Ascending aorta (tissue), 2 donors: ENCODE measurements at regions of chr2 and their contacts with region 1.

Region 1: DNA sequence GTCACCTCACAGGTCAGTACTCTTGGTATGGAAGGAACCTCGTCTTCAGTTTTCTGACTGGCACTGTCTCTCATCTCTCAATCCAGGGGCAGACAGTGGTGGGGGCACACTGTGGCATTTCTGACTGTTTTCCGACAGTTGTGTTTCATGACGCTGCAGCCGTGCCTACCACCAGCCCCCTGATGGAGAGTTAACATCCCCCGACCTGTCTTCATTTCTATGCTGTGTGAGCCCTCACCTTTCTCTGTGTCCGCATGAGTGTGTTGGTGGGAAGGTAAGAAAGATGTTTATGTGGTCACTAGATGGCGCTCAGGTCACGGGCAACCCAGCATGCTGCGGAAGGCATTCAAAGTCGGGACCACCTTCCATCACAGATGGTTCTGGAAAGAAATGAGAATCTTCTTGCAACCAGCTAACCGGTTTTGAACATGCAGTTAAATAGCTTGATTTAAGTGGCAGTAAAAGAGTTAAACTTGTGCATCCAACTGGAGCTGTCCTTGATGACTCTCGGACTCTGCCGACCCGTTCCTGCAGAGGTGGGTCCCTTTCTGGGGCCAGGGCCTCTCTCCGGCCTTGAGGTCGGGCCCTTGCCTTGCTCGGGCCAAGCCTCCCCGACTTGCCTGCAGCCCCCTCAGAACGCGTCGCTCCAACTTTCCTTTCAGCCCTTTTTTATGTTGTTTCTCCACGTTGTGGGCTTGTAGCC is 92.4 kb downstream of the DYSF start:
- DNase-seq: peak in 1 of 2 donors; percentile 76
- H3K4me3 ChIP-seq: no peak overlapping the region
- H3K27ac ChIP-seq: no peak overlapping the region
- H3K4me1 ChIP-seq: no peaks in the 10 kb centered on the region
- H3K27me3 ChIP-seq: no peaks in the 10 kb centered on the region
- CTCF ChIP-seq: peak; percentile 74 to 84 (median 75)

Region 2: GRCh38 chr2:71510196-71510807 is 35.4 kb before region 1 on chr2:
- intact Hi-C with region 1: no loop called
- DNase-seq: peak in 1 of 2 donors; percentile 83
- H3K4me3 ChIP-seq: no peak overlapping the region
- H3K27ac ChIP-seq: no peak overlapping the region
- H3K4me1 ChIP-seq: no peaks in the 10 kb centered on the region
- H3K27me3 ChIP-seq: no peaks in the 10 kb centered on the region
- CTCF ChIP-seq: peak; percentile 76 to 91 (median 86)

Region 3: GRCh38 chr2:71614976-71615766 is 69.4 kb after region 1 on chr2:
- intact Hi-C with region 1: loop called (anchors 2 kb)
- DNase-seq: peak; percentile 46 to 89
- H3K4me3 ChIP-seq: no peak overlapping the region
- H3K27ac ChIP-seq: peak overlapping the region; percentile 84 to 87
- H3K4me1 ChIP-seq: peaks cover 0 to 27% of the 10 kb centered on the region in 2 donors
- H3K27me3 ChIP-seq: no peaks in the 10 kb centered on the region
- CTCF ChIP-seq: no peak

Region 4: GRCh38 chr2:71685078-71685848 is 139.5 kb after region 1 on chr2:
- intact Hi-C with region 1: loop called (anchors 5 kb)
- DNase-seq: no peak
- H3K4me3 ChIP-seq: no peak overlapping the region
- H3K27ac ChIP-seq: peak overlapping the region; percentile 37 to 63
- H3K4me1 ChIP-seq: peaks cover 3% of the 10 kb centered on the region in 2 donors
- H3K27me3 ChIP-seq: no peaks in the 10 kb centered on the region
- CTCF ChIP-seq: no peak

Region 5: GRCh38 chr2:71742953-71743601 is 197.4 kb after region 1 on chr2:
- intact Hi-C with region 1: no loop called
- DNase-seq: peak; percentile 54 to 93
- H3K4me3 ChIP-seq: no peak overlapping the region
- H3K27ac ChIP-seq: peak overlapping the region; percentile 53 to 62
- H3K4me1 ChIP-seq: peaks cover 23% of the 10 kb centered on the region in 2 donors
- H3K27me3 ChIP-seq: no peaks in the 10 kb centered on the region
- CTCF ChIP-seq: no peak

Region 6: GRCh38 chr2:71882949-71883472 is 337.3 kb after region 1 on chr2:
- intact Hi-C with region 1: loop called (anchors 5 kb)
- DNase-seq: peak in 1 of 2 donors; percentile 84
- H3K4me3 ChIP-seq: no peak overlapping the region
- H3K27ac ChIP-seq: no peak overlapping the region
- H3K4me1 ChIP-seq: peaks cover 21 to 40% of the 10 kb centered on the region in 2 donors
- H3K27me3 ChIP-seq: no peaks in the 10 kb centered on the region
- CTCF ChIP-seq: no peak

Region 7: GRCh38 chr2:71923887-71924533 is 378.3 kb after region 1 on chr2:
- intact Hi-C with region 1: loop called (anchors 5 kb)
- DNase-seq: no peak
- H3K4me3 ChIP-seq: no peak overlapping the region
- H3K27ac ChIP-seq: no peak overlapping the region
- H3K4me1 ChIP-seq: no peaks in the 10 kb centered on the region
- H3K27me3 ChIP-seq: no peaks in the 10 kb centered on the region
- CTCF ChIP-seq: peak; percentile 58 to 85 (median 78)

Region 8: DNA sequence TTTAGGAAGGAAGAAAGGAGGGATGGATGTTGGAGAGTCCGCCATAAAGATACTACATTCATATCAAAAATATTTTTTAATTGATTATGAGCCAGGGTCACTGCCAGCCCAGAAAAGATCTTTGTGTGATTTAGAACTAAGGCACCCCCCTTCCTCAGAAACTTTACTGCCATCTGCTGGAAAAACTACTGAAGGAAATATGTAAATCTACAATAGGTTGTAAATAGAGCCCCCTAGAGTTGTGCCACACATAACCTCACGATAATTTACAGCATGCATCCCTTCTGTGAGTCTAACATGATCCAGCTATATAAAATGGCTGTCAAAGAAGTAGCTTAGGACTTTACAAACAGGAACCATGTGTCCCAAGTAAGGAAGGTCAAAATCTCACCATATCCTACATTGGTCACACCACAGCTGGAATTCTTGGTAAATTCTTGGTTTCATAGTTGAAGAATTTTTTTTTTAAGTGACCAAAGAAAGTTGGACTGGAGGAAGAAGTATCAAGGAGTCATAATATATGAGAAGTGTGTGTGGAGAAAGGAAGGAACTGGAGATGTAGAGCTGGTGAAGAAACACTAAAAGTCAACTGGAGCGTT is 449.4 kb after region 1 on chr2:
- intact Hi-C with region 1: loop called (anchors 5 kb)
- DNase-seq: no peak
- H3K4me3 ChIP-seq: no peak overlapping the region
- H3K27ac ChIP-seq: no peak overlapping the region
- H3K4me1 ChIP-seq: no peaks in the 10 kb centered on the region
- H3K27me3 ChIP-seq: no peaks in the 10 kb centered on the region
- CTCF ChIP-seq: peak in 2 of 3 experiments; percentile 31 to 57

Region 9: GRCh38 chr2:72579591-72580180 is 1034.0 kb after region 1 on chr2:
- intact Hi-C with region 1: loop called (anchors 5 kb)
- DNase-seq: no peak
- H3K4me3 ChIP-seq: no peak overlapping the region
- H3K27ac ChIP-seq: no peak overlapping the region
- H3K4me1 ChIP-seq: no peaks in the 10 kb centered on the region
- H3K27me3 ChIP-seq: no peaks in the 10 kb centered on the region
- CTCF ChIP-seq: peak; percentile 43 to 69 (median 54)